Activated CD8-positive, alpha-beta T cell treated with anti-CD3 and anti-CD28 coated beads, Interleukin-2, amount 10 ng/mL, durations not matched to agents 7 days and 5 days (primary cell): ENCODE measurements at regions of chr6 and their contacts with region 1.

Region 1: DNA sequence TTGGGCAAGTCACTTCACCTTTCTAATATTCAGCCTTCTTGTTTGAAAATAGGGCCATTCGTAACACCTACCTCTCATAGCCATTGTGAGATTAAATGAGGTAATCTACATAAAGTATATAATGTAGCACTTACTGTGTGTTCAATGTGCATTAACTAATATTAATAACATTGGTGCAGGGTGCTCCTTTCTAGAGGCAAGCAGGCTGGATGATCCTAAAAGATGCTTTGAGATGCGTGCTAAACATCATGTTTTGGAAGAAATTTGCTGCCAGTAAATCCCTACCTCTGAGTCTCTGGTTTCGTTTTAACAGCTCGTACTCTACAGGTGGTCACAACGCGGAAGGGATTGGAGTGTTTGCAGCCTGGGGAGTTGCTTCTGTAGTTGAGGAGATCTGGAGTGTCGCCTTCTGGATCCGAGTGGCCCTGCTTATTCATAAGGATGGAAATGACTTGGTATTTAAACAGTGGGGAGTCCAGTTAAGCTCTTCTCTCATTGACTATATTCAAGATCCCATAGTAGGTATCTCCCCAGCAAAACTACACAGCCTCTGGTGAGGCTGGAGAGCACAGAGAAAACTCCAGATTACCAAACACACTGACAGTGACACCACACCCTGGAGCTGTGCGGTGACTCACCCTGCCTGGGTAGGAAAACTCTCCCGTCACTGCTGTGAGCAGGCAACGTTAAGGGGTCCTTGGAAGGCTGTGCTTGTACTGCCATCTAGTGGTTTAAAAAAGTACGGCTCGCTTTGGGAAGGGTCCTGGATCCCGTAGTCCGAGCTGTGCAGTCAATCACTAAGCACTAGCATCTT is 107.9 kb downstream of the MAP3K7 start:
- DNase-seq: peak; percentile 86
- ATAC-seq: peak; percentile 94
- H3K4me3 Mint-ChIP-seq: no peak overlapping the region
- H3K27ac Mint-ChIP-seq: peak overlapping the region; percentile 15
- H3K4me1 Mint-ChIP-seq: peaks cover 57% of the 10 kb centered on the region
- H3K27me3 Mint-ChIP-seq: no peaks in the 10 kb centered on the region

Region 2: DNA sequence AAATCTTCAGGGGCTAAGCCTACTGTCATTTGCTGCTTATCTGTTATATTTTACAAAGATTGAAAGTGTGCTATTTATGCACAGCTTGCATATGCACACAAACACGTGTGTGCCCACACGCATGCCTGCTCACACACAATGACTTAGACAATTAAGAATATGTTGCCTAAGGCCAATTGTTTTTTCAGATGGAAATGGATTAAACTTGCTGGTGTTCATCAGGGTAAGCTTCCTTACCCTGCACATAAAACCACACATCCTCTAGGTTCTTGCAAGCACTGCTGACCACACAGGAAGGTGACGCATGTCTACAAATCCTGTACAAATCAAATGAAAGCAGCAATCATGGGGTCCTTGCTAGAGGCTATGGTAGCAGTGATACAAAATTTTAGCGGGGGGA is 526.3 kb before region 1 on chr6:
- CTCF ChIA-PET with region 1: interaction called, 10 read pairs
- POLR2A ChIA-PET with region 1: no interaction called
- DNase-seq: peak; percentile 85
- ATAC-seq: peak; percentile 95
- H3K4me3 Mint-ChIP-seq: peak overlapping the region; percentile 61
- H3K27ac Mint-ChIP-seq: peak overlapping the region; percentile 90
- H3K4me1 Mint-ChIP-seq: peaks cover 73% of the 10 kb centered on the region
- H3K27me3 Mint-ChIP-seq: no peaks in the 10 kb centered on the region

Region 3: DNA sequence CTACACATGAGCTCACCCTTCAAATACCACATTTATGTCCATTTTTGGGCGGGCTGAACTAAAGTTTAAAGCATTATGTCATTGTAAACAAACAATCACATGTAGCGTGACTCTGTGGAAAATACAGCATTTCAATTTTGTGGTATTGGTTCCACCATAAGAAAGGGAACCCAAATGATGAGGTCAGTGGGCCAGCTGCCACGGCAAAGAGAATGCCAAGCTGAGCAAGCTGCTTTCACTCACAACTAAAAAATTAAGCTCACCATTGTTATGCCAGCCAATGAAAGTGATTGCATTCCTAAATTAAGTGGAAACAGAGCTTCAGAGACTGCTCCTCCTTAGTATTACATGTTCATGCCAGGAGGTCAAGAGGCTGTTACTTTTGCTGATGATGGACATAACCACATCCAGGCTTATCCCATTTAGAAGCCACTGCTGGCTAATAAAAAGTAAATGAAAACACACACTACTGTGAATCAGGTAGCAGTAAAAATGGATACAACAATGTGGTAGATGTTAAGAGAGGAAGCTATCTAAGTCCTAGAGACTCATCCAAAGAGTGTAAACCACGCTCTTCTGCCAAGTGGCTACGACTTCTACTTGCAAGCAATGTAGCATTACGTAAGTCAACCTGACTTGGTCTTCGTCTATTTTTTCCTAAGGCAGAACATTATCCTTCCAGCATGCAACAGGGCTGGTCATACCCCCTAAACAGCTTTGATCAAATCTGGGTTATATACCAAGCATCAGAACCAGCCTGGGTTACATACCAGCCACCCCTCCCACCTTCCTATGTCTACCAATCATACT is 347.2 kb before region 1 on chr6:
- CTCF ChIA-PET with region 1: no interaction called
- POLR2A ChIA-PET with region 1: no interaction called
- DNase-seq: no peak
- ATAC-seq: peak; percentile 21
- H3K4me3 Mint-ChIP-seq: no peak overlapping the region
- H3K27ac Mint-ChIP-seq: no peak overlapping the region
- H3K4me1 Mint-ChIP-seq: peaks cover 46% of the 10 kb centered on the region
- H3K27me3 Mint-ChIP-seq: no peaks in the 10 kb centered on the region

Region 4: DNA sequence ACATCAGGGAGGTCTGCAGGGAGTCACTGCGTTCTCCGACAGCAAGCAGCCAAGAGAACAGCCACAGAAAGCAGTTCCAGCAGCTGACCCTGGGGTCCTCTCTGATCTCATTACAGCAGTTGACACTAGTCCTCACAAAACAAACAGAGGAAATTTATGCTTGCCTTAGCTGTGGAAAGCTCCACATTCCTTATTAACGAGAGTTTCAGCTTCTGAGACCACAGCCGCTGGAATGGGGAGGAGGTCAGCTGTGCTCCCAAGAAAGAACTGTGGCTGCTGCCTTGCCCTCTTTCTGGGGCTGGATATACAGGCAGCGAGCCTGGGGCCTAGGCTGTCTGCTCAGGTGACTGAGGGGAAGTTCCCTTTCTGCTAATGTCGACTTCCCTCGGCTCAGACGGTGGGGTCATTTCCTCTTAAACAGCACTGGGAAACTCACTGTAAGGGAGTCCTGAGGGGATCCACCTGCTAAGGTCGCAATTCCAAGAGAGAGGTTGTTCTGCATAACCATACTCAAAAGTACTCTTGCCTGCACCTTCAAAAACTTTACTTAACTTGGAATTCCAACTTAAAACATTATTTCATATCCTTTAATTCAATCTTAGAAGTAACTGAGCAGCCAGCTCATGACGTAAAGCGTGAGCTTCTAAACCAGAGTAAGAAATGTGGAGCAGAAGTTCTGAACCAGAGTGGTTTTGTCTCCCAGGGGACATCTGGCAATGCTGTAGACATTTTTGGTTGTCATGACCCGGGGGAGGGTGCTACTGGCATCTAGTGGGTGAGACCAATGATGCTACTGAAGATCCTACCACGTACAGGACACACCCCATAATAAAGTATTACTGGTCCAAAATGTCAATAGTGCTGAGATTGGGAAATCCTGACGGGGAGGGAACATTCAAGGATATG is 262.7 kb before region 1 on chr6:
- CTCF ChIA-PET with region 1: interaction called, 26 read pairs
- POLR2A ChIA-PET with region 1: interaction called, 4 read pairs
- DNase-seq: peak; percentile 59
- ATAC-seq: peak; percentile 25
- H3K4me3 Mint-ChIP-seq: peak overlapping the region; percentile 57
- H3K27ac Mint-ChIP-seq: no peak overlapping the region
- H3K4me1 Mint-ChIP-seq: peaks cover 25% of the 10 kb centered on the region
- H3K27me3 Mint-ChIP-seq: no peaks in the 10 kb centered on the region

Region 5: DNA sequence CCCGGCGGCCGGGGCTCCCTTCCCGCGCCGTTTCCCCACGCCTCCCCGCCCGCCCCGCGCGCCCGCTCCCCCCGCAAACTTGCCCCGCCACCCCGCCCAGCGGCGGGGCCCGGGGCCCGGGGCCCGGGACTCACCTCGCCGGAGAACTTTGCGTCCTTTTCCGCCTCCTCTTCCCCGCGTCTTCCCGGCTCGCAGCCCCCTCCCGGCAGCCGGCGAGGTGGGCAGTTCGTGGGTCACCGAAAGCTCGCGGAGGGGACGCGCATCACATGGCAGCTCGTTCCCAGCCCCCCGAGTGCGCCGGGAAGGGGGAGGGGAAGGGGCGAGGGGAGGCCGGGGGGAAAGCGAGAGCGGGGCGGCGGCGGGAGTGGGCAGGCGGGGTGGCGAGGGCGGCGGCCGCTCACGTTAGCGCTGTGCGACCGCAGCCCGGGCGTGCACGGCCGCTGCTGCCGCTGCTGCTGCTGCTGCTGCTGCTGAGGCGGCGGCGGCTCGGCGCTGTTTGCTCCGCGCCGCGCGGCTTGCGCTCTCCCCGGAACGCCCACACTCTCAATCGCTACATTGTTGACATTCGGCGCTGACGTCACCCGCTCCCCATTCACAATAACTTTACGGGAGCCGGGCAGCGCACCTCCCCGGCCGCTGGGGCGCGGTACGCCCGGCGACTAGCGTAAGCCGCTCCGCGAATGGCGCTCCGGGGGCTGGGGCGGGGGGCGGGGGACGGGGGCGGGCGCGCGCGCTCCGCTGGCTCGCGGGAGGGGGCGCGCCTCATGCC is 182.5 kb before region 1 on chr6 and contains the start of gene BACH2:
- CTCF ChIA-PET with region 1: interaction called, 253 read pairs
- POLR2A ChIA-PET with region 1: interaction called, 9 read pairs
- DNase-seq: peak; percentile 96
- ATAC-seq: peak; percentile 74
- H3K4me3 Mint-ChIP-seq: peak within 1 kb of the TSS; percentile 81
- H3K27ac Mint-ChIP-seq: peak within 1 kb of the TSS; percentile 84
- H3K4me1 Mint-ChIP-seq: peaks cover 32% of the 10 kb centered on the region
- H3K27me3 Mint-ChIP-seq: peaks cover 17% of the 10 kb centered on the region
- total RNA-seq, gene BACH2: 61.3 to 70.9 TPM

Region 6: DNA sequence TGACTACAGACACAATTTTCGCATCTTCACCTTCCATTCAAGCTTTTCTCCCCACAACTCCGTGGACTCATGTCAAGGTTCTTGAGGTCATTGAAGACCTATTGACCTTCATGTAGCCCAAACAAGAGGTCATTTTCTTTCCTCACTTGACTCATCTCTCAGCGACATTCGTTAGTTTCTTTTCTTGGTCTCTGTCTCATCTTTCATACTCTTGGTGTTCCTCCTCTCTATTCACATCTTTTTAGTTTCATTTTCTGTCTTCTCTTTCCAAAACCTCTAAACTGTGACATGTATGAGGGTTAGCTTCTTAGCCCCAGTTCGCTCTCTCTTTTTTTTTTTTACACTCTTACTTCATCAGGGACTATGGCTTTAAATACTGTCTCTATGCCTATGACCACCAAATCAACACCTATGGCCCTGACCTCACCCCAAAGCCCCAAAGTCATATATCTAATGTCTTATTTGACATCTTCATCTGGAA is 53.8 kb before region 1 on chr6:
- CTCF ChIA-PET with region 1: interaction called, 123 read pairs
- POLR2A ChIA-PET with region 1: interaction called, 7 read pairs
- DNase-seq: no peak
- ATAC-seq: peak; percentile 94
- H3K4me3 Mint-ChIP-seq: peak overlapping the region; percentile 64
- H3K27ac Mint-ChIP-seq: peak overlapping the region; percentile 91
- H3K4me1 Mint-ChIP-seq: peaks cover 27% of the 10 kb centered on the region
- H3K27me3 Mint-ChIP-seq: no peaks in the 10 kb centered on the region

Region 7: DNA sequence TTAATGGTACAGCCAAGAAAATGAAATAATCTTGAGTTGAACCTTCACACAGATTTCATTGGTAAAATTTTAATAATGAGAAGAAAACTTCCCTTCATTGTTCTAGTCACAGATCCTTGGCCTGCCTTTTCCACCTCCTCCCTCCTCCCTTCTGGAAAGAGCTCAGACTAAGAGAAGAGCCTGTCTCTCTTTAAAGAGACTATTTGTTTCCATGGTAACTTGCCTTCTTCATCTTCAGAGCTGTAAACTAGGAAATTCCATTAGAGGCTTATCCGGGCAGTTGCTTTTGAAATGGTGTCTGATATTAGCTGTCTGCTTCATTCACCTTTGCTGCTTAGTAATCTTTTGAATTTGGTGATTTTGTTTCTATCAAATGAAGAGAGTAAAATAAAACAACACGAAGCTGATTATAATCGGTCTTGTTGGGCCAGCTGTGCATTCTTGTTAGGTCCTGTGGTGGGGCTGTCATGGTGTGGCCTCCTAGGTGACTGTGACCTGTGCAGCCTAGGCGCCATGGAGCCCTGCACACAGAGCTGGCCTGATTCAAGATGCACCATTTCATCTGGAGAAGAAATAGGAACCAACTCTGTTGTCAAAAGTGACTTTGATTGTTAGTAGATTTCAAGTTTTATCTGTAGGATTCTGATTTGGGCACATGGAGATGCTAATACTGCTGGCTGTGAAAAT is 11.2 kb after region 1 on chr6:
- CTCF ChIA-PET with region 1: interaction called, 11 read pairs
- POLR2A ChIA-PET with region 1: no interaction called
- DNase-seq: no peak
- ATAC-seq: no peak
- H3K4me3 Mint-ChIP-seq: no peak overlapping the region
- H3K27ac Mint-ChIP-seq: no peak overlapping the region
- H3K4me1 Mint-ChIP-seq: peaks cover 6% of the 10 kb centered on the region
- H3K27me3 Mint-ChIP-seq: peaks cover 31% of the 10 kb centered on the region

Region 8: DNA sequence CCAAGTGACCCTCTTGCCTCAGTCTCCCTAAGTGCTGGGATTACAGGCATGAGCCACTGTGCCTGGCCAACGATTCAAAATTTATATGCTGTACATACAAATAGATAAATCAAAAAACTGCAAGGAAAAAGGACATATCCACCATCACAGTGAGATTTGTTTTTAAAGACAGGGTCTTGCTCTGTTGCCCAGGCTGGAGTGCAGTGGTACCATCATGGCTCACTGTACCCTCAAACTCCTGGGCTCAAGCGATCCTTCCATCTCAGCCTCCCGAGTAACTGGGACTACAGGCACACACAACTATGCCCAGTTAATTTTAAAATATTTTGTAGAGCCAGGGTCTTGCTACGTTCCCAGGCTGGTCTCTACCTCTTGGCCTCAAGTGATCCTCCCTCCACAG is 46.4 kb after region 1 on chr6:
- CTCF ChIA-PET with region 1: no interaction called
- POLR2A ChIA-PET with region 1: no interaction called
- DNase-seq: no peak
- ATAC-seq: no peak
- H3K4me3 Mint-ChIP-seq: no peak overlapping the region
- H3K27ac Mint-ChIP-seq: no peak overlapping the region
- H3K4me1 Mint-ChIP-seq: no peaks in the 10 kb centered on the region
- H3K27me3 Mint-ChIP-seq: no peaks in the 10 kb centered on the region